PC-3 (cell line): ENCODE measurements at regions of chr20 and their contacts with region 1.

Region 1: GRCh38 chr20:46132705-46133120 is 14.6 kb downstream of the CD40 start:
- DNase-seq: peak; percentile 76
- ATAC-seq: peak; percentile 96
- H3K4me3 ChIP-seq: no peak overlapping the region
- H3K27ac ChIP-seq: no peak overlapping the region
- H3K4me1 ChIP-seq: peaks cover 4% of the 10 kb centered on the region
- H3K27me3 ChIP-seq: peaks cover 43% of the 10 kb centered on the region
- CTCF ChIP-seq: peak; percentile 92

Region 2: DNA sequence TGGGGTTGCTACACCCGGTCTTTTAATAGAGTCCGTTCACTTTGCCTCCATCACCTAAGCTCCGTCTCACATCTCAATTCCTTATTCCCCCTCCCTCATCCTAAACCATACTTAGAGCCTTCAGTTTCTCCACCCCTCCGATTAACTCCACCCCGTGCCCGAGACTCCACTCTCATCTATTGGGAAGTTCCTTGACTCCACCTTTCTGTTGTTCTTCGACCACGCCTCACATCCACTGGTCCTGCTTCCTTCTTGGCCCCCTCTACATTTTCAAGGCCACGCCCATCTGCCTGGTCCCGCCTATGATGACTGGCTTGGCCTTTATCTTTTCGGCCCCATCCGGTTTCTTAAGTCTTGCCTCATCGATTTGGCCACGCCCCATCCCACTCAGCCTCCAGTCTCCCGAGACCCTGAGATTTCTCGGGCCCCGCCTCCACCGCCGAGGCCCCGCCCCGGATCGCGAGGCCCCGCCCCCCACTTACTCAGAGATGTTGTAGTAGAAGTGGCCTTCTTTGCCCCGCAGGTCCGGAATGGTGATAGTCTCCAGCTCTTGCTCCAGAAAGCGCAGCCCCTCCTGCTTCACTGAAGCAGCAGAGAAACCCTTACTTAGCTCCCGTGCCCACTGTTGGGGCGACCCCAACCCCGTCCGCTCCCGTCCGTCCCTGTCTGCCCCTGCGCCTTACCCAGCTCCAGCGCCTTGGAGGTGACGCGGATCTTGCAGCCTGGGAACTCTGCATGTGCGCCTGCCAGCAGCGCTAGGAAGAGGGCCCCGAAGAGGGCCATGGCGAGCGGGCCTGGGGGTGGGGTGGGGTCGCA is 221.8 kb before region 1 on chr20:
- CTCF ChIA-PET with region 1: no interaction called
- POLR2A ChIA-PET with region 1: no interaction called
- intact Hi-C with region 1: no loop called
- DNase-seq: peak; percentile 99
- ATAC-seq: peak; percentile 76
- H3K4me3 ChIP-seq: peak overlapping the region; percentile 65
- H3K27ac ChIP-seq: peak overlapping the region; percentile 35
- H3K4me1 ChIP-seq: peaks cover 15% of the 10 kb centered on the region
- H3K27me3 ChIP-seq: no peaks in the 10 kb centered on the region
- CTCF ChIP-seq: no peak

Region 3: GRCh38 chr20:46089417-46090388 is 43.0 kb before region 1 on chr20 and contains the start of gene NCOA5:
- CTCF ChIA-PET with region 1: no interaction called
- POLR2A ChIA-PET with region 1: no interaction called
- intact Hi-C with region 1: no loop called
- DNase-seq: peak; percentile 98
- ATAC-seq: peak; percentile 85
- H3K4me3 ChIP-seq: peak within 1 kb of the TSS; percentile 76
- H3K27ac ChIP-seq: peak within 1 kb of the TSS; percentile 77
- H3K4me1 ChIP-seq: peaks cover 37% of the 10 kb centered on the region
- H3K27me3 ChIP-seq: no peaks in the 10 kb centered on the region
- CTCF ChIP-seq: peak; percentile 31
- total RNA-seq, gene NCOA5: 26.9 and 32.1 TPM in 2 replicates

Region 4: GRCh38 chr20:46174469-46175128 is 41.9 kb after region 1 on chr20:
- CTCF ChIA-PET with region 1: no interaction called
- POLR2A ChIA-PET with region 1: no interaction called
- intact Hi-C with region 1: loop called (anchors 2 kb)
- DNase-seq: peak; percentile 54
- ATAC-seq: peak; percentile 79
- H3K4me3 ChIP-seq: no peak overlapping the region
- H3K27ac ChIP-seq: no peak overlapping the region
- H3K4me1 ChIP-seq: no peaks in the 10 kb centered on the region
- H3K27me3 ChIP-seq: peaks cover 82% of the 10 kb centered on the region
- CTCF ChIP-seq: peak; percentile 43

Region 5: GRCh38 chr20:46182276-46183192 is 49.8 kb after region 1 on chr20:
- CTCF ChIA-PET with region 1: interaction called, 15 read pairs
- POLR2A ChIA-PET with region 1: no interaction called
- intact Hi-C with region 1: no loop called
- DNase-seq: no peak
- ATAC-seq: no peak
- H3K4me3 ChIP-seq: no peak overlapping the region
- H3K27ac ChIP-seq: no peak overlapping the region
- H3K4me1 ChIP-seq: no peaks in the 10 kb centered on the region
- H3K27me3 ChIP-seq: peaks cover 28% of the 10 kb centered on the region
- CTCF ChIP-seq: 0 out of 2 replicates have a peak, but pooled peaks have one; percentile 12

Region 6: DNA sequence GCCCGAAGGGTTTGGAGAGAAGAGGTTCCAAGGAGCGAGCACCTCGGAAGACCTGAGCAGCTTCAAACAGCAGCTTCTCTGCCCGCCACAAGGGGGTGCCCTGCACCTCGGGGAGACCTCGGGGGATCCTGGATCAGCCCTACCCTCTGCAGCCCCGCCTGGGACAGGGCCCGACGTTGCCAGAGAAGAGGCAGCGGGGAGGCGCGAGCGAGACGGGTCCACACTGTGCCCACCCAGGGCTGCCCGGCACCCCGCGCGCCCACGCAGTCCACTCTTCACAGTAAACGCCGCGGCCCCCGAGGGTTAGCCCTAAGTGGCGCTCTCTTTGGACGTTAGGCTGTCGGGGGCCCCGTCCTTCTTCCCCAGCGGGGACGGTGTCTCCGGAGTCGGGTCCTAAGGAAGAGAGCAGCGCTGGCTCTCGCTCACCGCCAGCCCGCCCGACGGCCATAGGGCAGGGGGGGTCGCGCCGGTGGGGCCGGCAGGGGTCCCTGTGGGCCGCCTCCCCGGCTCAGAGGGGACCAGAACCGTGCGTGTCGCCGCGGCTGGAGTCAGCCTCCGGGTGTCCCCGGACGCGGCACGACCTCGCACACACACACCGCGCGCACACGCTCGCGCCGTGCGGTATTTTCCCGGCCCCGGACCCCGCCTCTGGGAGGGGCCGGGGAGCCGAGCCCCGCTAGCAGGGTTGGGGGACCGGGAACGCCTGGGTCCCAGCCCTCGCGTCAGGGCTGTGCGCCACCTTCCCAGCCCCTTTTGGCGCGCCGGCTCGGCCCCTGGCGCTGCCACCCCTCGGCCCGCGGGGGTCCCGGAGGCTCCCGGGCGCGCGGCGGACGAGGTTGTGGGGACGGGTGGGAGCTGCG is 174.7 kb after region 1 on chr20:
- CTCF ChIA-PET with region 1: no interaction called
- POLR2A ChIA-PET with region 1: no interaction called
- intact Hi-C with region 1: loop called (anchors 5 kb)
- DNase-seq: peak; percentile 59
- ATAC-seq: peak; percentile 74
- H3K4me3 ChIP-seq: no peak overlapping the region
- H3K27ac ChIP-seq: no peak overlapping the region
- H3K4me1 ChIP-seq: no peaks in the 10 kb centered on the region
- H3K27me3 ChIP-seq: peaks cover 79% of the 10 kb centered on the region
- CTCF ChIP-seq: peak; percentile 89

Region 7: DNA sequence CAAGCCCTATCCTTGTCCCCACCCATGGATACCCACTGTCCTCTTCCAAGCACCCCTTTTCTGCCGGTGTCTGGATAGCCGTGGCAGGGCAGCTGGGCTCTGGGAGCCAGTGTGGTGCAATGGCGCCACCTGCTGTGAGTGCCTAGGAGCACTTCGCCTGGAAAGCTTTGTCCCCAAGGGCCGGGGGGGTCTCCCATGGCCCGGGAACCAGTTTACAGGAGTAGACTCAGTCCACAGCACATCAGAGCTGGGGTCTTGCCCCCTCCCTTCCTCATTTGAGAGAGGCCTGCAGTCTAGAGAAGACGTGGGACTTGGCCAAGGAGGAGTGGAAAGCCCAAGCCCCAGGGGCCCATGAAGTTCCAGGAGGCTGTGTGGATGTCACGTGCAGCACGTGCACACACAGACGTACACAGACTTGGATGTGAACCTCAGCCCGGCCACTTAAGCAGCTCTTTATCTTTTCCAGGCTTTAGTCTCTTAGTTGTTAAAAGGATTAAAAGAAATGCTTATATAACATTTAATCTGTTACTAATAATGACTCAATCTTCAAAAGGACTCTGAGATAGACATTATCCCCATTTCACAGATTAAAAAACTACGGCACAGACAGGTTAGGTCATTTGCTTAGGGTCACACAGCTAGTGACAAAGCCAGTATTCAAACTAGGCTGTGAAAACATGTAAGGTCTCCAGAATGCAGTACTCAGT is 216.5 kb after region 1 on chr20:
- CTCF ChIA-PET with region 1: no interaction called
- POLR2A ChIA-PET with region 1: no interaction called
- intact Hi-C with region 1: loop called (anchors 5 kb)
- DNase-seq: peak; percentile 47
- ATAC-seq: peak; percentile 34
- H3K4me3 ChIP-seq: no peak overlapping the region
- H3K27ac ChIP-seq: no peak overlapping the region
- H3K4me1 ChIP-seq: peaks cover 14% of the 10 kb centered on the region; the same call in 1 of the 2 replicates
- H3K27me3 ChIP-seq: no peaks in the 10 kb centered on the region
- CTCF ChIP-seq: peak; percentile 86

Region 8: GRCh38 chr20:46438156-46438750 is 305.5 kb after region 1 on chr20:
- CTCF ChIA-PET with region 1: interaction called, 4 read pairs
- POLR2A ChIA-PET with region 1: no interaction called
- intact Hi-C with region 1: loop called (anchors 1 kb)
- DNase-seq: peak; percentile 73
- ATAC-seq: peak; percentile 92
- H3K4me3 ChIP-seq: no peak overlapping the region
- H3K27ac ChIP-seq: no peak overlapping the region
- H3K4me1 ChIP-seq: peaks cover 6% of the 10 kb centered on the region; the same call in 1 of the 2 replicates
- H3K27me3 ChIP-seq: peaks cover 48% of the 10 kb centered on the region
- CTCF ChIP-seq: peak; percentile 80

Region 9: DNA sequence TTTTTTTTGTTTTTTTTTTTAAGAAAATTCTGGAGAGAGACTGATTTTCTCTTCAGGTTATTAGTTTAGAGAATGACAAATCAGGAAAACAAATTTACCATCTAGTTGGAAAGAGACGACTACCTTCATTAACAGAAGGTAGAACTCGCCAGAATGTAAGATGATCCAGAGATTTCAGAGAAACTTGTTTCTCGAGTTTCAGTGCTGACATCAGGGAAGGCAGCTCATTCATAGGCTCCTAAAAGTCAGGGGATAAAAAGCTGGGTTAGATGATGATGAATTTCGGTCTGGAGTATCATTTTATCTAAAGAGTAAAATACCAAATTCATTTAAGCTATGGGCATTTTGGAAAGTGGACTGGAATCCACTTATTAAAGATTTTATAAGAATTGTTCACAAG is 352.7 kb after region 1 on chr20:
- CTCF ChIA-PET with region 1: no interaction called
- POLR2A ChIA-PET with region 1: no interaction called
- intact Hi-C with region 1: loop called (anchors 5 kb)
- DNase-seq: peak; percentile 70
- ATAC-seq: peak; percentile 46
- H3K4me3 ChIP-seq: peak overlapping the region; percentile 41
- H3K27ac ChIP-seq: no peak overlapping the region
- H3K4me1 ChIP-seq: peaks cover 9% of the 10 kb centered on the region; the same call in 1 of the 2 replicates
- H3K27me3 ChIP-seq: peaks cover 39% of the 10 kb centered on the region
- CTCF ChIP-seq: no peak